A673 (cell line): ENCODE measurements at regions of chr6 and their contacts with region 1.

Region 1: GRCh38 chr6:31087494-31088089 is 24.8 kb downstream of the C6orf15 start:
- DNase-seq: peak; percentile 93
- H3K4me3 ChIP-seq: no peak overlapping the region
- H3K27ac ChIP-seq: no peak overlapping the region
- H3K4me1 ChIP-seq: peaks cover 19% of the 10 kb centered on the region
- H3K27me3 ChIP-seq: no peaks in the 10 kb centered on the region
- CTCF ChIP-seq: peak; percentile 84

Region 2: DNA sequence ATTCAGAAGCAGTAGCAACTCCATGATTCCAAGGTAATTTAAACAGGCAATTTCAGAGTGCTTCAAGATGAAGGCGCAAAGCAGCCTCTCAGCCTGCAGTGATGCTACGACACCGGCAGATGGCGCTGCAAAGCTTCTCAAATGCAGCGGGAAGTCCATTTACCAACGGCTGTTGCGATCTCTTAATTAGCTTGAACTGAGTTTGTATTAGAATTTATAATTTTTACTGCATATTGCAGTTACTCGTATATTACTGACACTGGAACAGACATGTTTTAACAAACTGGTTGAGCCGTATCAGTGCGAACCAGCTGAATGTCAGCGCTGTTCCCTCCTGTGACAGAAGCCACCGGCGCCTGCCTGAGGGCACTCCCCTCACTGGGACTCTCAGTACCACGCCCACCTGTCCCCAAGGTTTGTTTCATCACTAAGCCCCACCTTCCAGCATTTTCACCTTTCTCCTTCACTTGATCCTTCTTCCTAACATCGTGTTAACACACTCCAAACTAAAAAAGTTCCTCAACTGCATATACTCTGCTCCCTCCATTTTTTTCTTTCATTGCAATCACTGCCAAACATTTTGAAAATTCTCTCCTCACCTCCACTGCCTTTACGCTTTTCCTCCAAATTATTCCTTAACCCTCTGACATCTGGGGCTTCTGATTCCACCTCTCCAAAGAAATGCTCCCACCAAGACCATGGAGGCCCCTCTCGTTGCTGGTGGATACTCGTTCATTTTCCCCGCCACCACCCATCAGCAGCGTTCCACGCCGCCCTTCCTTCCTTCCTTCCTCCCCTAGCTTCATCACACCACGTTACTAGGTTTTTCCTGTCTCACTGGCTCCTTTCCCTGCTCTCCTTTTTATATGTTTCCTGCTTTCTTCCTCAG is 545.8 kb before region 1 on chr6:
- CTCF ChIA-PET with region 1: interaction called, 3 read pairs
- POLR2A ChIA-PET with region 1: no interaction called
- intact Hi-C with region 1: loop called (anchors 1 kb)
- DNase-seq: peak; percentile 85
- H3K4me3 ChIP-seq: peak overlapping the region; percentile 32
- H3K27ac ChIP-seq: no peak overlapping the region
- H3K4me1 ChIP-seq: peaks cover 4% of the 10 kb centered on the region
- H3K27me3 ChIP-seq: no peaks in the 10 kb centered on the region
- CTCF ChIP-seq: peak; percentile 99

Region 3: GRCh38 chr6:30590994-30591393 is 496.6 kb before region 1 on chr6:
- CTCF ChIA-PET with region 1: no interaction called
- POLR2A ChIA-PET with region 1: no interaction called
- intact Hi-C with region 1: no loop called
- DNase-seq: no peak
- H3K4me3 ChIP-seq: no peak overlapping the region
- H3K27ac ChIP-seq: peak overlapping the region; percentile 59
- H3K4me1 ChIP-seq: no peaks in the 10 kb centered on the region
- H3K27me3 ChIP-seq: no peaks in the 10 kb centered on the region
- CTCF ChIP-seq: no peak

Region 4: DNA sequence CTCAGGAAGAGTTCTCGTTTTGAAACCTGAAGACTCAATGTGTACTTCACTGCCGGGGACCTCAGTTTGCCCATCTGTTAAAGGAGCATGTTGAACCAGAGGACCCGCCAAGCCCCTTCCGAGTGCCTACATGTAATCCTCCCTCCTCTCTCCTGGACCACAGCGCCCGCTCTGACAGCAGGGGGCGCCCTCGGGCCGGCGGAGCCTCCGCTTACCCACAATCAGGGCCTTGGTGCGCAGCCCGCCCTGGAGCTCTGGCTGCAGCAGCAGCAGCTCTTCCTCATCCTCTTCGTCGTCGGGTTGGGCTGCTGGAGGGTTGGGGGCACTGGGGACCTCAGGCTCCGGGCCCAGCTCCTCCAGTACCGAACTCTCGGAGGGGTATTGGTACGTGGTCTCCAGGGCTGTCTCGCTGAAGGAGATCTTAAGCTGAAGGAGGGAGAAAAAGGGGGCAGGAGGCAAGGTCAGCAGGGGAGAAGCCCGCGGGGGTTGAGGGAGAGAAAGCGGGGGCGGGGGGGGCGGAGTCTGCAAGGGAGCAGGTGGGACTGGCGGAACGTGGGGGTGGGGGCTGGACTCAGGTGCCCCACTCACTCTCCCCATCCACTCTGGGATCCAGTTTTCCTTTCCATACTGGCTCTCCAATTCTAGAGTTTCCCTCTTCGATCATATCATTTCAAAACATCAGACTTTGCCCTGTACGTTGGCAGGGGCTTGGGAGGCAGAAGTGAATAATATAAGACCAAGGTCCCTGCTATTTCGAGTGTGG is 408.4 kb before region 1 on chr6:
- CTCF ChIA-PET with region 1: interaction called, 12 read pairs
- POLR2A ChIA-PET with region 1: no interaction called
- intact Hi-C with region 1: loop called (anchors 2 kb)
- DNase-seq: peak; percentile 89
- H3K4me3 ChIP-seq: no peak overlapping the region
- H3K27ac ChIP-seq: peak overlapping the region; percentile 43
- H3K4me1 ChIP-seq: peaks cover 23% of the 10 kb centered on the region
- H3K27me3 ChIP-seq: no peaks in the 10 kb centered on the region
- CTCF ChIP-seq: peak; percentile 97

Region 5: GRCh38 chr6:30742316-30743098 is 345.1 kb before region 1 on chr6 and contains the start of gene FLOT1:
- CTCF ChIA-PET with region 1: no interaction called
- POLR2A ChIA-PET with region 1: no interaction called
- intact Hi-C with region 1: loop called (anchors 5 kb)
- DNase-seq: peak; percentile 92
- H3K4me3 ChIP-seq: peak within 1 kb of the TSS; percentile 90
- H3K27ac ChIP-seq: peak within 1 kb of the TSS; percentile 80
- H3K4me1 ChIP-seq: peaks cover 11% of the 10 kb centered on the region
- H3K27me3 ChIP-seq: no peaks in the 10 kb centered on the region
- CTCF ChIP-seq: no peak
- total RNA-seq, gene FLOT1: 116 and 120 TPM in 2 replicates

Region 6: DNA sequence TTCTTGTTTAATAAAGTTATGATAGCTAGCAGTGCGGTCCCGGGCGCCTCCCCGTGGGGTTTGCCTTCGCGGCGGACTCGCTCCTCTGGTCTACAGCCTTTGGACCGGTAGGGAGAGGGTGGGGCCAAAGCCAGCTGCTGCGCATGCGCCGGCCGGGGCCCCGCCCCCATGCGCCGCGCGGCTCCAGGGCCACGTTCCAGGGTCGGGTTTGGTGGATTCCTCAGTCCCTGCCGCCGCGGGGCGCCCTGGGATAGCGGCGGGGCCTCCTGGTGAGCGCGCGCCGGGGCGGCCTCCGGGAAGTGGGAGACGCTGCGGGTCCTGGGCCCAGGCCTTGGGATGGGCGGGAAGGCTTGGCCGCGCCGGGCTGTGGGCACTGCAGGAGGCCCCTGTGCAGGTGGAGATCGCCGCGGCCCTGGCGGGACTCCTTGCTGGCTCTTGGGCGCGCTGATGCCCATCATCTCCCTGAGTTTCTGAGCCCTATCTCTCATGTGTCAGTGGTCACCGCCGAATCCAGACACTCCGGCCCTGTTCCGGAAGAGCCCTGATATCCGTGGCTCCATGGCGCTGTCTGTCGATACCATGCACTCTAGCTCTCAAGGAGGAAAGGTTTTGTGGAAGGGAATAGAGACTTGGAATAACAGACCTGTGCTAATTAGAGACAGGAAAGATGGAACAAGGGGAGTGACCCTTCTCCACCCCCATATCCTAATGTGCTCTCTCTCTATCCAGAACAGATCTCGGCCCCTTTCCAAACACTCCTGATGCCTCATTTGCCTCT is 173.3 kb before region 1 on chr6 and contains the start of gene VARS2:
- CTCF ChIA-PET with region 1: interaction called, 22 read pairs
- POLR2A ChIA-PET with region 1: no interaction called
- intact Hi-C with region 1: no loop called
- DNase-seq: peak; percentile 89
- H3K4me3 ChIP-seq: peak within 1 kb of the TSS; percentile 62
- H3K27ac ChIP-seq: peak within 1 kb of the TSS; percentile 75
- H3K4me1 ChIP-seq: peaks cover 13% of the 10 kb centered on the region
- H3K27me3 ChIP-seq: no peaks in the 10 kb centered on the region
- CTCF ChIP-seq: peak; percentile 40
- total RNA-seq, gene VARS2: 48.4 and 53.4 TPM in 2 replicates